GM12878 (cell line): ENCODE measurements at regions of chr2 and their contacts with region 1.

Region 1: DNA sequence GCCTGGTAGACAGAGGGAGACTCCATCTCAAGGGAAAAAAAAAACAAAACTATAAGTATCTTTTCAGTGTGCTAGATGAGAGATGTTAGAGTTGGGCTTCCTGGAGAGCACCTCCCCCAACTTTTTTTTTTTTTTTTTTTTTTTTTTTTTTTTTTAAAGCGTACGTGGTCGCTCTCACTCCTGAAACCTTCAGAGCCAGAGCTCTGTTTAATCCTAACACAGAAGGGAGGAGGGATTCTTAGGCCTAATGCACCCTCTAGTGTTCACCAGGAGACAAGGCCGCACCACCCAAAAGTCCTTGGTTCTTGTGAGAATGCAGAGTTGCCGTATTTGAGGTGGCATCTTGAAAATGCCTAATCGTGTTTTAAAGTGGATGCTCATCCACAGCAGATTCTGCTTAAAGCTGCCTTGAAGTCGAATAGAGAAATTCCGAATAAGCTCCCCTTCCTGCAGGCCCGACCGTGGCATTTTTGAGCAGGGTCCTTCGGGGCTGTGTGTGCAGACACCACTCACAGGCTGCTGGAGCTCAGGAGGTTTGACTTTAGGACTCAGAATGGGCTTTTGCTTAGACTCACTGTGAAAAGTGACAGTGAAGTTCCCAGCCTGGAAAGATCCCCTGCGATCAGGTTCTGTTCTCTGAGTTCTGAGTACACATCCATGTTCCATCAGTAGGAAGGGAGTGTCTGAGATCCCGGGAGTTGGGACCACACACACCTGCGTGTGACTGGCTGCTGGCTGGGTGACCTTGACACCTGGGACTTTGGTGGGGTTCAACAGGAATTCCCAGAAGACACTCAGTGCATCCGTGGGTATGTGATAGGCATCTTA is 252.6 kb downstream of the AGAP1 start:
- DNase-seq: no peak
- ATAC-seq: peak; percentile 97
- H3K4me3 ChIP-seq: no peak overlapping the region
- H3K27ac ChIP-seq: no peak overlapping the region
- H3K4me1 ChIP-seq: no peaks in the 10 kb centered on the region
- H3K27me3 ChIP-seq: peaks cover 0 to 1% of the 10 kb centered on the region in 2 experiments; a peak in 2 of 4 replicates
- CTCF ChIP-seq: peak; percentile 81 to 86 (median 81)
- EP300 ChIP-seq: no peak
- POLR2A ChIP-seq: no peak
- RAD21 ChIP-seq: peak; percentile 84

Region 2: DNA sequence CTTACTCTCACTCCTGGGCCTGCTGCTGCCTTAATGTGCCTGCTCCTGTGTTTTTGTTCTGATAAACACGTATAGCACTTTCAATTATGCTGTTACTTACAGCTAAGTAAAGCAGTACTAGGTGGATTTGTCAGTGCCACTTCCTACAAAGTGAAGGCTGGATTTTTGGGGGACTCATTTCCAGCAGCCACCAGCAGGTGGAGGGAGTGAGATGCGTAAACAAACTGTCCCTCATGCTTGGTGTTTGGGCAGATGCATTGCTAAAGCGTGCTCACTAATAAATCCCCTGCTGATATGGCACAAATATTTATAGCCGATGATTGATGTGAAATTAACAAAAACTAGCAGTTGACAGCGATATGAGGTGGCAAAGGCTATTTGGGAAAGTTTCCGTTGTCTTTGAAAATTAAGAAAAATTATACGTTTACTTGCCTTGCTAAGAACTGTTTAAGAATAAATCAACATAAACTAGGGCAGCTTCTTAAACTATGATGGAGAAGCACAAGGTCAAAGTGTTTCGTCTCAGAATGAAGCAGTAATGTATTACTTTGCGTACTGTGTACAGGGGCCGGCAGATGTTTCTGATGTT is 151.0 kb before region 1 on chr2:
- CTCF ChIA-PET with region 1: interaction called, 36 read pairs
- POLR2A ChIA-PET with region 1: no interaction called
- RAD21 ChIA-PET with region 1: interaction called, 22 read pairs
- SMC1A ChIA-PET with region 1: interaction called, 10 read pairs
- in situ Hi-C with region 1: loop called (anchors 5 kb)
- intact Hi-C with region 1: loop called (anchors 1 kb)
- DNase-seq: no peak
- ATAC-seq: peak; percentile 76
- H3K4me3 ChIP-seq: no peak overlapping the region
- H3K27ac ChIP-seq: no peak overlapping the region
- H3K4me1 ChIP-seq: no peaks in the 10 kb centered on the region
- H3K27me3 ChIP-seq: no peaks in the 10 kb centered on the region
- CTCF ChIP-seq: peak; percentile 74 to 82 (median 81)
- EP300 ChIP-seq: no peak
- POLR2A ChIP-seq: no peak
- RAD21 ChIP-seq: peak; percentile 56